ENCODE measurements at regions of chr2 and their contacts with region 1.

Region 1: DNA sequence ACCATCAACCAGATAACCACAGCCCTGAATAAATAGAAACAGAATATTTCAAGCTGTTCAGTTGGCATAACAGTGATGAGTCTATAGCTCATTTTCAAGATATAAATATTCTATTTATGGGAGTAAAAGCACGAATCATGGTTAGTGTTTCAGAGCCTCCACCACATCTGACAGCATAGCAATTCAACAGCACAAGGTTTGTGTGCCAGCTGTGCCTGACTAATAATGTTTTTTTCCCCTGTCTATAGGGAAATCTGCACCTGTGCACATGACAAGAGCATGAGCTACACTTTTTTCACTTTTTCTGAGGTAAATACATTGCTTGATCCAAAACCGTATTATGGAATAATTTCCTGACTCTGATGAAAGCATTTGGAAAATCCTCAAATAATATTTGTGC is 251.3 kb downstream of the RPIA start:
- DNase-seq: no peak
- ATAC-seq: no peak
- H3K4me3 Mint-ChIP-seq: no peak overlapping the region
- H3K27ac Mint-ChIP-seq: no peak overlapping the region
- H3K4me1 Mint-ChIP-seq: no peaks in the 10 kb centered on the region
- H3K27me3 Mint-ChIP-seq: no peaks in the 10 kb centered on the region
- CTCF ChIP-seq: no peak

Region 2: DNA sequence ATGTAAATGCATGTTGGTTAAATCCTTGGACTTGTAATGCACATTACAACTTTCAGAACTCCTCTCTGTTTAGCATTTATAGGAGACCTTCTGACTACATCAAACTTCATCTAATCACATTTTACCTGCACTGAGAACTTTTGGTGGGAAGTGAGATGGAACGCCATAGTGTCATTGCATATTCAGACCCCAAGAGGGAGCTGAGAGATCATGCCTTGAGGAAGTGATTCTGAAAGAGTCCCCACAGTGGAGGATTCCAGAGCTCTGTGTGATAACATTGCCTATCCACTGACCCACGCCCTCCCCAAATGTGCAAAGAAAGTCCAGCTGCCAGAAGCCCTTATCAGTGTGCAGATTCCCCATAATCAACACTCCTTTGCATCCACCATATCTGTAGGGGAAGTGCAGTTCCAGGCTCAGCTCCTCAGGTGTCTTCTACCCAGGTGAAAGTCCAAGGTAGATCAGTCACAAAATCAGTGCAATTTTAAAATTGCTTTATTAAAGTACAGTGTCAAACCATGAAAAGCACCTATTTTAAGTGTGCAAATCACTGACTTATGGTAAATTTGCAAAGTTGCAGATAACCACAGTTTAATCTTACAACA is 38.9 kb before region 1 on chr2:
- CTCF ChIA-PET with region 1: interaction called, 24 read pairs
- POLR2A ChIA-PET with region 1: no interaction called
- DNase-seq: no peak
- ATAC-seq: peak; percentile 79
- H3K4me3 Mint-ChIP-seq: no peak overlapping the region
- H3K27ac Mint-ChIP-seq: no peak overlapping the region
- H3K4me1 Mint-ChIP-seq: no peaks in the 10 kb centered on the region
- H3K27me3 Mint-ChIP-seq: no peaks in the 10 kb centered on the region
- CTCF ChIP-seq: peak; percentile 56

Region 3: GRCh38 chr2:88959480-88960220 is 16.9 kb after region 1 on chr2:
- CTCF ChIA-PET with region 1: interaction called, 13 read pairs
- POLR2A ChIA-PET with region 1: no interaction called
- DNase-seq: no peak
- ATAC-seq: no peak
- H3K4me3 Mint-ChIP-seq: no peak overlapping the region
- H3K27ac Mint-ChIP-seq: no peak overlapping the region
- H3K4me1 Mint-ChIP-seq: no peaks in the 10 kb centered on the region
- H3K27me3 Mint-ChIP-seq: no peaks in the 10 kb centered on the region; the same call in 1 of the 2 replicates
- CTCF ChIP-seq: no peak; the same call in 1 of the 2 replicates

Measured in WTC11 (cell line).